Lower lobe of right lung (tissue), 2 donors: ENCODE measurements at regions of chr4 and their contacts with region 1.

Region 1: DNA sequence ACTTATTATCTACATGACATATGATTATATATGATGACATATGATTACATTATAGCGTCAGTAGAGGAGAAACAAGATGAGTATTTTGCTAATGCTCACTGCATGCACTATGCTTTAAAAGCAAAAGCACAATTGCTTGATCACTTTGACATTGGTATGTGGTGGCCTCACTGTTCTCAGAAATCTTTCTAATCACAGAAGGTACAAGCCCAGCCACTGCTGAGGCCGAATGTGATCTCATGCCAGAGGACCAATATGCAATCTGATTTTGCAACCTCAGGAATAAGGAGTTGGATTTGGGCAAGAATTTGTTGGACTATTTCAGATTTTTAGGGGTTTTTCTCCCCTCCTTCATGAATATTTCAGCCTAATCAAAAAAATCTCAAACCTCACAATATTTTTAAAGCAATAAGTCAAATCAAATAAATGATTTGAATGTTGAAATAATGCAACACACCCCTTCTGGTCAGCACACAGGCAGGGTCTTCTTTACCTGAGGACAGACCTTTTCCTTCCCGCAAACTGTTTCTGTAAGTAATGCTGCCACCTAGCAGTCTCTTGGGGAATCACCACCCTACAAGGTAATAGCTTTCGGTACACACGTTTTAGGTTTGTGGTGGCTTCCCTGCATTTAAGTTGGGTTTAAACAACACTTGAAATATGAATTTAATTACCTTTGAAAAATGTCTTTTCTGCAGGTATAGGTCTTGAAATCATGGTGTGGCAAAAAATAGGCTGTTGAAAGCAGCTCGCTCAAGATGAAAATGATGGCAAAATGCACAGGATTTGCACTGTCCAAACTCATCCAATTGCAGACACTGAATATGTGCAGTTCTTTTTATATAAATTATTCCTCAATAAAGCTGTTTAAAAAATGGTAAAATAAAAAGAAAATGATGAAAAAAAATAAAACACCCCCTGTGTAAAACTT is 4.8 kb upstream of the CXCL13 start:
- DNase-seq: no peak
- ATAC-seq: peak; percentile 65 to 84
- H3K4me3 ChIP-seq: no peak overlapping the region
- H3K27ac ChIP-seq: no peak overlapping the region
- H3K4me1 ChIP-seq: peaks cover 6% of the 10 kb centered on the region
- H3K27me3 ChIP-seq: no peaks in the 10 kb centered on the region
- CTCF ChIP-seq: peak; percentile 84

Region 2: GRCh38 chr4:77385124-77385969 is 215.4 kb before region 1 on chr4:
- intact Hi-C with region 1: loop called (anchors 10 kb)
- DNase-seq: no peak
- ATAC-seq: peak; percentile 72 to 84
- H3K4me3 ChIP-seq: no peak overlapping the region
- H3K27ac ChIP-seq: no peak overlapping the region
- H3K4me1 ChIP-seq: no peaks in the 10 kb centered on the region
- H3K27me3 ChIP-seq: no peaks in the 10 kb centered on the region
- CTCF ChIP-seq: peak; percentile 79

Region 3: GRCh38 chr4:77843628-77844027 is 242.8 kb after region 1 on chr4:
- intact Hi-C with region 1: no loop called
- DNase-seq: no peak
- ATAC-seq: no peak
- H3K4me3 ChIP-seq: no peak overlapping the region
- H3K27ac ChIP-seq: no peak overlapping the region
- H3K4me1 ChIP-seq: no peaks in the 10 kb centered on the region
- H3K27me3 ChIP-seq: no peaks in the 10 kb centered on the region
- CTCF ChIP-seq: no peak